Keratinocyte (primary cell): ENCODE measurements at regions of chr4 and their contacts with region 1.

Region 1: DNA sequence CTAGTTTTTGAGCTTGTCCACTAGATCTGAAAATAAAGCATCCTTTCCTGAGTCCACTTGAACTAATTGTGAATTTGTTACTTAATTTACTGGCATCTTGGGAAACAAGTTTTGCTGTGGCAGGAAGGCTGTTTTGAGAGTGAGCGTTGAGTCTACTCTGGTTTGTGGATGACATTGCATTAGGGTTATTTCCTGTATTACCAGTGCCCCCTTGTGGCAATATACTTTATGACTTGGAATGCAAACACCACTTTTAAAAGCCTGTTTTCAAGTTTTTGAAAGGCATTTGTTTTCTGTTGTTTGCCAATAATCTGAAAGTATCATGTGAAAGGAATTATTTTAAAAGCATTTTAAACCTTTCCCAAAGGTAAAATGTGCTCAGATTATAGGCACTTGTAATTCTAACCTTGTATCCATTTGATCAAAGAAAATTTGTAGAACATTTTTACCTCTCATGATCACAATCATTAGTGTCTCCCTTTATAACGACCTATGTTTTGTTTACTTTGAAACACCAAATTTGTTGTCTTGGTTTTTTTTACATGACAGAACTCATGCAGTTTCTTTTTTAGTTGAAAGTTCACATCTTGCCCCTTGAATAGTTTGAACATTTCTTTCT is 18.0 kb upstream of the CYP2U1 start:
- DNase-seq: peak; percentile 19
- H3K4me3 ChIP-seq: no peak overlapping the region
- H3K27ac ChIP-seq: no peak overlapping the region
- H3K4me1 ChIP-seq: no peaks in the 10 kb centered on the region
- H3K27me3 ChIP-seq: no peaks in the 10 kb centered on the region
- CTCF ChIP-seq: peak; percentile 42 to 52 (median 52)

Region 2: DNA sequence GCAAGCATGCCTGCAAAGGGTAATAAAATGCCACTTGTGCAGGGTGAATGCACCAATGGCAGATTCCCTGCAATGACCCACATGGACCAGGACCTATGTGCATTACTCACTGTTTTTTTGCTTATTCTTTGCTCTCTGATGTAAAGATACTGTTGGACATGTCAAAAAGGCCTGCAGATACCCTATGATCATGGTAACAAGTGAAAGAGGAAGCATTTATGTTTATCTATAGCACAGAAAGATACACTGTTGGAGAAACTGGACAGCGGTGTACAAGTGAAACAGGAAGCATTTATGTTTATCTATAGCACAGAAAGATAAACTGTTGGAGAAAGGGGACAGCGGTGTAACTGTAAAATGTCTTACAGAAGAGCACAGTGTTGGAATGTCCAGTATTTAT is 320.9 kb before region 1 on chr4:
- dilution Hi-C with region 1: no loop called
- DNase-seq: no peak
- H3K4me3 ChIP-seq: no peak overlapping the region
- H3K27ac ChIP-seq: no peak overlapping the region
- H3K4me1 ChIP-seq: no peaks in the 10 kb centered on the region
- H3K27me3 ChIP-seq: no peaks in the 10 kb centered on the region
- CTCF ChIP-seq: no peak

Region 3: DNA sequence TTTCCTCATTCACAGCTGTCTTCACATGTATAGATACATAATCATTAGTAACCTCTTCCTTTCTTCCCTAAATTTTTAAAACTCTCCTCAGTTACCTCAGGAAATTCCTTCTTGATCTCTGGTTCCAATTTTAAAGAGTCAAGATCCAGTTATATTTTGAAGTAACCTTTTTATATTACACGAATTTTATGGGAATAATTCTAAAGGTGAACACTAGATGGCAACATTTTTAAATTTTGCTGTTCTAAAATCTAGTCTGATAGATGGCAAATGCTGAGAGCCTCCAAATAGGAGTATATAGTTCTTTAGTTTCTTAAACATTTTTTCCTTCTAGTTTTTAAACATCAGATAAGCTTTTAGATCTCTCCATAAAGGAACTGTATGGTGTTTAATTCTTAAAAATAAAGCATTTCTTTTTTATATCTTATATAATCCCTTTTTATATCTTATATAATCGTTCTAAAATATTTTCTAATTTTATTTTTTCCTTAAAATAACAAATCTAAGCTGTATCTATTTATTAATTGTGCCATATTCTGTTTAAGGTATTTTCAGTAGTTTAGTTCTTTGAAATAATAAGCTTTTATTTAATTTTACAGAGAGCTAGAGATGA is 155.4 kb before region 1 on chr4:
- dilution Hi-C with region 1: loop called (anchors 25 kb)
- DNase-seq: no peak
- H3K4me3 ChIP-seq: no peak overlapping the region
- H3K27ac ChIP-seq: no peak overlapping the region
- H3K4me1 ChIP-seq: no peaks in the 10 kb centered on the region
- H3K27me3 ChIP-seq: no peaks in the 10 kb centered on the region
- CTCF ChIP-seq: peak in 2 of 3 experiments; percentile 16 to 30